IMR-90 (cell line): ENCODE measurements at regions of chr10 and their contacts with region 1.

Region 1: DNA sequence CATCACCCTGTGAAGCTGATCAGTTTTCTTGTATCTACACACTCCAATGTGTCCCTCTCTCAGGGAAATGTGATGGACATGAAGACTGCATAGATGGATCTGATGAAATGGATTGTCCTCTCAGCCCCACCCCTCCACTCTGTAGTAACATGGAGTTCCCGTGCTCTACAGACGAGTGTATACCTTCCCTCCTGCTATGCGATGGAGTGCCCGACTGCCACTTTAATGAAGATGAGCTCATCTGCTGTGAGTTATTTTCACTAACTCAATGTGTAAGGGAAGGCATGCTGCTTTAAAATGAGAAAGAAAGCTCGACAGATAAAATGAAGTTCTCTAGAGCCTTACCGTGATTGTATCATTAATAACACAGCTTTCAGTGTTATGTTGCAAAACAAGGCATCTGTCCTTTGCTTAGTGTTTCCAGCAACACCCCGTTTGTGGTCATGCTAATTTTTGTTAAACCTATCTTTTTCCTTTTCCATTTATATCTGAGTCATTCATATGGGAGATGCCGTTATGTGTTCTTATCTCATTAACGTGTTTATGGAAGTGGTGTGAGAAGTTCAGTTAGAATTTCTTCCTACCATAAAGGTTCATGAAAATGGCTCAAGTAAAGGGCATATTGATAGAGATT is 220.9 kb upstream of the PLXDC2 start:
- DNase-seq: no peak
- ATAC-seq: no peak
- H3K4me3 ChIP-seq: no peak overlapping the region
- H3K27ac ChIP-seq: no peak overlapping the region
- H3K4me1 ChIP-seq: 0 out of 2 replicates have a peak, but pooled peaks cover 1% of the 10 kb centered on the region
- H3K27me3 ChIP-seq: no peaks in the 10 kb centered on the region
- CTCF ChIP-seq: no peak
- POLR2A ChIP-seq: no peak
- RAD21 ChIP-seq: no peak

Region 2: GRCh38 chr10:19003341-19003740 is 592.0 kb before region 1 on chr10:
- CTCF ChIA-PET with region 1: no interaction called
- POLR2A ChIA-PET with region 1: no interaction called
- dilution Hi-C with region 1: no loop called
- in situ Hi-C with region 1: no loop called
- intact Hi-C with region 1: no loop called
- DNase-seq: no peak
- ATAC-seq: no peak
- H3K4me3 ChIP-seq: no peak overlapping the region
- H3K27ac ChIP-seq: no peak overlapping the region
- H3K4me1 ChIP-seq: peaks cover 2% of the 10 kb centered on the region; the same call in 1 of the 2 replicates
- H3K27me3 ChIP-seq: no peaks in the 10 kb centered on the region
- CTCF ChIP-seq: no peak
- POLR2A ChIP-seq: no peak
- RAD21 ChIP-seq: no peak

Region 3: GRCh38 chr10:19256331-19256730 is 339.0 kb before region 1 on chr10:
- CTCF ChIA-PET with region 1: no interaction called
- POLR2A ChIA-PET with region 1: no interaction called
- dilution Hi-C with region 1: no loop called
- in situ Hi-C with region 1: no loop called
- intact Hi-C with region 1: loop called (anchors 5 kb)
- DNase-seq: no peak
- ATAC-seq: no peak
- H3K4me3 ChIP-seq: no peak overlapping the region
- H3K27ac ChIP-seq: no peak overlapping the region
- H3K4me1 ChIP-seq: peaks cover 7% of the 10 kb centered on the region
- H3K27me3 ChIP-seq: no peaks in the 10 kb centered on the region
- CTCF ChIP-seq: no peak
- POLR2A ChIP-seq: no peak
- RAD21 ChIP-seq: no peak

Region 4: GRCh38 chr10:20573924-20574323 is 978.6 kb after region 1 on chr10:
- CTCF ChIA-PET with region 1: no interaction called
- POLR2A ChIA-PET with region 1: no interaction called
- dilution Hi-C with region 1: no loop called
- in situ Hi-C with region 1: no loop called
- intact Hi-C with region 1: no loop called
- DNase-seq: no peak
- ATAC-seq: no peak
- H3K4me3 ChIP-seq: no peak overlapping the region
- H3K27ac ChIP-seq: no peak overlapping the region
- H3K4me1 ChIP-seq: no peaks in the 10 kb centered on the region
- H3K27me3 ChIP-seq: no peaks in the 10 kb centered on the region
- CTCF ChIP-seq: no peak
- POLR2A ChIP-seq: no peak
- RAD21 ChIP-seq: no peak